Ovary (tissue), 10 donors: ENCODE measurements at regions of chr22 and their contacts with region 1.

Region 1: DNA sequence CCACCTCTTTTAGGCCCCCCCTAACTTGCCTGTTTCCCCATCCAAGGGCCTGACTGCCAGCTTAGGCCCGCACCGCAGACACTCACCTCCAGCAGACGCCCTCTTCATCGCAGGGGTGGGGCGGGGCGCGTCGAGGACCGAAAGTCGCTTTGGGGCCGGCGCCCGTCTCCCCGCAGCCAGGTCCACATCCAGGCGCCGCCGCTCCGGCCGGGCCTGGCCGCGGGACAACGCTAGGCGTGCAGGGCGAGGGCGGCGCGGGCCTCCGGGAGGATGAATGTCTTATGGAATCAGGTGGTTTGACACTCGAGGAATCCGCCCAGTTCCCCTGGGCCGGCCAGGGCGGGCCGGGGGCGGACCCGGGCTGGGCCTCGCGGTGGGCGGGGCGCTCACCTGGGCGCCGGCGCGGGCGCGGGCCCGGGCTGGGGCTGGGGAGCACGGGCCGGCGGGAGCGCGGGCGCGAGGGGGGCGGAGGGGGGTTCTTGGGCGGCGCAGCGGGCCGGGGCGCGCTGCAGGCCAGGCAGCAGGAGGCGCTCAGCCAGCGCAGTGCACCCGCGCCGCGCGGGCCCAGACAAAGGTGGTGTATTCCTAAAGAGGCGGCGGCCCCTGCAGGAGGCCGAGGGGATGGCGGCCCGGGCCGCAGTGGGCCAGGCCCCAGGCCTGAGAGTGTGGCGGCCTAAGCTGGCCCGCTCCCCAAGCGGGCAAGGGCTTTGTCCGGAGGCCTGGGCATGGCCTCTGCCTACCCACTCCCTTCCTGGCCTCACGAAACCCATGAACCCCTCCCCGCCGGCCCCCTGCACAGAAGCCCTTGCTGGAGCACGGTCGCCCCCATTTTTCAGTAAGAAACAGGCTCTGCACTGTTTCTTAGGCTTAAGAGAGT is 177.6 kb downstream of the IGLL1 start:
- DNase-seq: peak; percentile 79 to 93 (median 87)
- H3K4me3 ChIP-seq: peak overlapping the region; percentile 26
- H3K27ac ChIP-seq: peak overlapping the region; percentile 48 to 83
- H3K4me1 ChIP-seq: peaks cover 8% of the 10 kb centered on the region
- H3K27me3 ChIP-seq: no peaks in the 10 kb centered on the region
- CTCF ChIP-seq: peak; percentile 36 to 83 (median 70)
- EP300 ChIP-seq: no peak
- POLR2A ChIP-seq: no peak

Region 2: DNA sequence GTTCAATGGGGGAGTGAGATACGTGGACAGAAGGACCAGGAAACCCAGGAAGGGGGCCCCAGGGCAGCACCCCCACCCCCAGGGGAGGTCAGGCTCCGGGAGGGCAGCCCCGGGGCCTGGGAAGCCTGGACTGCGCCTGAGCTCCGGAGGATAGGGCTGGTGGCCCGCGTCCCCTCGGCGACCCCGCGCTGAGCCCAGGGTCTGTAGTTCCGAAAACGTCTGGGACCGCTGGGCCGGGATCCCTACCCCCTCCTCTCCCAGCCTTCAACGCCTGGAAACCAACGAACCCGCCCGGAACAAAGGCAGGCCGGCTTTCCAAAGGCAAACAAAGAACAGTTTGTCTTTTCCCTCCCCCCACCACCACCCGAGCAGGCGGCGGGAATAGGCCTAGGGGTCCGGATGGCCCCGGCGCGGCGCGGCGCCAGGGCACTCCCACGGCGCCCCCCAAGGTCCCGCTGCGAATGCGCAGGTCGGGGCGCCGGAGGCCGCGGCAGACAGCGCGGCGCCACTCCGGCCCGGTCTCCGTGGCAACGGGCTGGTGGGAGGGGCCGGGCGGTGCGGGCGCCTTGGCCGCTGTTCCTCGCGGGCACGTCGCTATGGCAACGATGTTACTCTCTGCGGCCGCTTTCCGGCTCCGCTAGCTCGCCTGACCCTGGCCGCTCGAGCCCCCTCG is 119.1 kb after region 1 on chr22:
- intact Hi-C with region 1: loop called in 1 of 4 experiments (anchors 10 kb)
- DNase-seq: peak; percentile 93 to 96 (median 95)
- H3K4me3 ChIP-seq: peak overlapping the region; percentile 37
- H3K27ac ChIP-seq: peak overlapping the region; percentile 91 to 97
- H3K4me1 ChIP-seq: peaks cover 19% of the 10 kb centered on the region
- H3K27me3 ChIP-seq: no peaks in the 10 kb centered on the region
- CTCF ChIP-seq: peak in 2 of 3 donors; percentile 22 to 45
- EP300 ChIP-seq: no peak
- POLR2A ChIP-seq: peak; percentile 66

Region 3: GRCh38 chr22:23533328-23533762 is 130.8 kb after region 1 on chr22:
- intact Hi-C with region 1: loop called (anchors 5 to 10 kb)
- DNase-seq: peak in 4 of 5 donors; percentile 54 to 74 (median 58)
- H3K4me3 ChIP-seq: no peak overlapping the region
- H3K27ac ChIP-seq: peak overlapping the region; percentile 77 to 88
- H3K4me1 ChIP-seq: peaks cover 45% of the 10 kb centered on the region
- H3K27me3 ChIP-seq: no peaks in the 10 kb centered on the region
- CTCF ChIP-seq: peak in 2 of 3 donors; percentile 30 to 54
- EP300 ChIP-seq: no peak
- POLR2A ChIP-seq: no peak

Region 4: DNA sequence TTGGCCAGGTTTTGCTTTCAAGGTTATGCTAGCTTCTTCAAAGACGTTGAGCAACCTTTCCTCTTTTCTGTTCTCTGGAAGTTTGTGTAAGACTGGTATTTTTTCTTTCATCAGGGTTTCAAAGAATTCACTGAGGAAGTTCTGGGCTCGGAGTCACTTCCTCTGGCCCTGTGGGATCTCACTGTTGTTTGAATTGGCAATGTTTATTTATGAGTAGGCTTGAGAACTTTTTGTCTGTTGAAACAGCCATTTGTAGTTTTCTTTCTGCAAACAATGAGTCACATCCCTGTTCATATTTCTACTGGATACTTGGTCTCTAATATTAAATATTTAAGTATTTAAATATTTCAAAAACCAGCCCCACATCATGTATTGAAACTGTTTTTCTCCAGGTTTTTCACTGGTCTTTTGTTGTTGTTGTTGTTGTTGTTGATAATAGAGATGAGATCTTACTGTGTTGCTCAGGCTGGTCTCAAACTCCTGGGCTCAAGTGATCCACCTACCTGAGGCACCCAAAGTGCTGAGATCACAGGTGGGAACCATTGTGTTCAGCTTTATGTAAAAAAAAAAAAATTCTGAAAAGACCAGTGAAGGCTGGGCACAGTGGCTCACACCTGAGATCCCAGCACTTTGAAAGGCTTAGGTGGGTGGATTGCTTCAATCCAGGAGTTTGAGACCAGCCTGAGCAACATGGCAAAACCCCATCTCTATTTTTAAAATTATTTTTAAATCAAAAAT is 805.7 kb after region 1 on chr22:
- intact Hi-C with region 1: no loop called
- DNase-seq: peak in 2 of 5 donors; percentile 36 to 66
- H3K4me3 ChIP-seq: no peak overlapping the region
- H3K27ac ChIP-seq: peak overlapping the region in 1 of 2 donors; percentile 17
- H3K4me1 ChIP-seq: peaks cover 3% of the 10 kb centered on the region
- H3K27me3 ChIP-seq: no peaks in the 10 kb centered on the region
- CTCF ChIP-seq: no peak
- EP300 ChIP-seq: no peak
- POLR2A ChIP-seq: no peak